AG04450 (cell line): ENCODE measurements at regions of chr14 and their contacts with region 1.

Region 1: GRCh38 chr14:39266871-39267591 is 33.3 kb downstream of the MIA2 start:
- DNase-seq: peak; percentile 51
- H3K4me3 ChIP-seq: peak overlapping the region; percentile 95
- H3K27ac ChIP-seq: peak overlapping the region; percentile 99
- H3K27me3 ChIP-seq: no peaks in the 10 kb centered on the region
- CTCF ChIP-seq: no peak

Region 2: DNA sequence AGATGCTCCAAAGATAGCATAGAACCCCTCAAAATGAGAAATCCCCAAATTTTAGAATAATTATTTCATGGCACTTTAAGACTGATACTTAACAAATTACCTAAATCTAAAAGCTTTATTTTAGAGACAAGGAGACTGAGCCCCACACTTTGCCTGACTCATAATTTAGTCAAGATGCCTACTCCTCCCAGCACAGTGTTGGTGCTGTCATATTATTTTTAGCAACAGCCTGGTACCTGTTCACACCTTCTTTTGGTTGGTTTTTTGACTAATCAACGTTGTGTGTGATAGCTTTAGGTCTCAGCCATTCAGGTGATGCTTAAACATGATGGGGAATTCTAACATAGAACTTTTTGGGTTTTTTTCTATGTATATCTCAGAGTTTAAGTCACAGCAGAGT is 284.2 kb before region 1 on chr14:
- CTCF ChIA-PET with region 1: no interaction called
- POLR2A ChIA-PET with region 1: no interaction called
- DNase-seq: no peak
- H3K4me3 ChIP-seq: no peak overlapping the region
- H3K27ac ChIP-seq: no peak overlapping the region
- H3K27me3 ChIP-seq: no peaks in the 10 kb centered on the region
- CTCF ChIP-seq: no peak

Region 3: GRCh38 chr14:39169541-39169900 is 97.5 kb before region 1 on chr14:
- CTCF ChIA-PET with region 1: no interaction called
- POLR2A ChIA-PET with region 1: interaction called, 28 read pairs
- DNase-seq: no peak
- H3K4me3 ChIP-seq: peak overlapping the region; percentile 95
- H3K27ac ChIP-seq: peak overlapping the region; percentile 98
- H3K27me3 ChIP-seq: no peaks in the 10 kb centered on the region
- CTCF ChIP-seq: no peak

Region 4: DNA sequence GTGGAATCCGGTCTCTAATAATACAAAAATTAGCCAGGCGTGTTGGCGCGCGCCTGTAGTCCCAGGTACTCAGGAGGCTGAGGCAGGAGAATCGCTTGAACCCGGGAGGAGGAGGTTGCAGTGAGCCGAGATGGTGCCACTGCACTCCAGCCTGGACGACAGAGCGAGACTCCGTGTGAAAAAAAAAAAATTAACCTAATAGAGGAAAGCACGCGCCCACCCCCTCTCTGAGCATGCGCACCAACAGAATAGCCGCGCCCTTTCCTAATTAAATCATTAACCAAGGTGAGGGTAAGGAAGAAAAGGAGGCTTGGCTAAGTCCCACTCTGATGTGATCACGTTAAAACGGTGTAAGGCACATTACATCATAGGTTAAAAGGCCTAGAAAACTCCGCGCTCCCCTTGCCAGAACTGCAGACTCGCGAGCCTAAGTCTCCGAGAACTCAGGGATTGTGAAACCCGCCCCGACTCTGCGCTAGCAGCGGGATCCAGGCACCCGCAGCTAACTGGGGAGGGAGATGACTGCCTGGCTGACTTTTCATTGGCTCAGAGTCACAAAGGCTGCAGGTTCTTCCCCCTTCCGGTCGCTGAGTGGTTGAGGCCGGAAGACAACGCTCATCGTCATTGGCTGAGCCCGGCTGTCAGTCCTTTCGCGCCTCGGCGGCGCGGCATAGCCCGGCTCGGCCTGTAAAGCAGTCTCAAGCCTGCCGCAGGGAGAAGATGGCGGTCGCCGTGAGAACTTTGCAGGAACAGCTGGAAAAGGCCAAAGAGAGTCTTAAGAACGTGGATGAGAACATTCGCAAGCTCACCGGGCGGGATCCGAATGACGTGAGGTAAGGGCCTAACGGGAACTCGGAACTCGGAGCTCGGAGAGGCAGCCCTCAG is 92.2 kb before region 1 on chr14 and contains the start of gene PNN:
- CTCF ChIA-PET with region 1: no interaction called
- POLR2A ChIA-PET with region 1: interaction called, 28 read pairs
- DNase-seq: peak; percentile 99
- H3K4me3 ChIP-seq: peak within 1 kb of the TSS; percentile 91
- H3K27ac ChIP-seq: peak within 1 kb of the TSS; percentile 87
- H3K27me3 ChIP-seq: no peaks in the 10 kb centered on the region
- CTCF ChIP-seq: no peak
- polyA plus RNA-seq, gene PNN: 18.5 and 19.7 TPM in 2 replicates